Right ventricle myocardium superior (tissue), 1 donor: ENCODE measurements at regions of chr2 and their contacts with region 1.

Region 1: DNA sequence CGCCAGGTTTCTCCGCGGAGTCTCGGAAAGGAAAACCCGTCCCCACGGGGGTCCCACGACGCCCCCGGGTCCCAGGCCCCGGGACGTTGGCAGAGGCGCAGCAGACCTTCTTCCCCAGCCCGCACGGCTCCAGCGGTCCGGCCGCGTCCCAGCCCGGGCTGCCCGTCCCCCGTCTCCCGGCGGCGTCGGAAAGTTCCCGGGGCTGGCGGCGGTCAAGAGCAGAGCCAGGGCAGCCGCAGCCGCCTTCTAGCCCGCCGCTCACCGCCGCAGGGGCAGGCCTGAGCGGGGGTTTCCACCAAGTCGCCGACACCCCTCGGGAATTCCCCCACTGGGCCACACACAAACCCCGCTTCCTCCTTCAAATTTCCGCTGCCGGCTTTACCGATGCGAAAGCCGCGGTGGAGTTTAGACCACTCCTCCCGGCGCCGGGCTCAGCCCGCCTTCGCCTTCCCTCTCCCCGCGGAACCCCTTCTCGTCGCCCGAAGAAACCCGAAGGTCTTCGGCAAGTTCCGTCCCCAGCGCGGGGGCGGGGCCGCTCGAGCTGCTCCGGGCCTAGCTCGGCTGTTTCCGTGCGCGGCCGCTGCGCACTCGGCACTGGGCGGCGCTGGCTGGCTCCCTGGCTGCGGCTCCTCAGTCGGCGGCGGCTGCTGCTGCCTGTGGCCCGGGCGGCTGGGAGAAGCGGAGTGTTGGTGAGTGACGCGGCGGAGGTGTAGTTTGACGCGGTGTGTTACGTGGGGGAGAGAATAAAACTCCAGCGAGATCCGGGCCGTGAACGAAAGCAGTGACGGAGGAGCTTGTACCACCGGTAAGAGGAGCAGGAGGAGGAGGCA is at the start of gene CREB1:
- DNase-seq: peak; percentile 99
- ATAC-seq: peak; percentile 96
- total RNA-seq, gene CREB1: 47.9 TPM

Region 2: DNA sequence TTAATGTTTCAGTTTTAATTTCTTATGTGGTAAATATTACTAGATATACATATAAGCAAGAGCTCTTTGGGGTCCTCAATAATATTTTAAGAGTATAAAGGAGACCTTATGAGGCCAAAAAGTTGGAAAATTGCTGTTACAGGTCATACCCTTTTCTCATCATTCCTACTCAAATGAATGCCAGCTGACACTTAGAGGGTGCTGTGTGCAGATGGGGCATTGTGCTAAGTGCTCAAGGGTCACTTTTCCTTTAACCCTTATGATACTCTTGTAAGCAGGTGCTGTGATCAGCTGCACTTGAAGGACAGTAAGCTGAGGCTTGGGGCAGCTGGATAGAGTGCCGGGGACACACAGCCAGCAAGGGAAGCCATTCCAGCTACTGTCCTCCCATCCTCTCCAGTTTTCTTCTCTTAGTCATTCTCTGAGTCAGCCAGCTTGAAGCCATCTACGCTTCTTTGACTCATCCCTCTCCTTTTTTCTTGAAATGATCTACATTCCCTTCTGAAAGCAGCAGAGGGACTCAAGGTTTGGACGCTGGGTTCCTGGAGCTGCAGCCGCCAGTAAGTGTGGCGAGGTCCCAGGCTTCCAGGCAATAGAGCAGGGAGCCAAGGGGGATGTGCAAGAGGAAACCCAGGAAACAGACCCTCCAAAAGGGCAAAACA is 41.8 kb before region 1 on chr2:
- intact Hi-C with region 1: loop called (anchors 10 kb)
- DNase-seq: no peak
- ATAC-seq: no peak

Region 3: DNA sequence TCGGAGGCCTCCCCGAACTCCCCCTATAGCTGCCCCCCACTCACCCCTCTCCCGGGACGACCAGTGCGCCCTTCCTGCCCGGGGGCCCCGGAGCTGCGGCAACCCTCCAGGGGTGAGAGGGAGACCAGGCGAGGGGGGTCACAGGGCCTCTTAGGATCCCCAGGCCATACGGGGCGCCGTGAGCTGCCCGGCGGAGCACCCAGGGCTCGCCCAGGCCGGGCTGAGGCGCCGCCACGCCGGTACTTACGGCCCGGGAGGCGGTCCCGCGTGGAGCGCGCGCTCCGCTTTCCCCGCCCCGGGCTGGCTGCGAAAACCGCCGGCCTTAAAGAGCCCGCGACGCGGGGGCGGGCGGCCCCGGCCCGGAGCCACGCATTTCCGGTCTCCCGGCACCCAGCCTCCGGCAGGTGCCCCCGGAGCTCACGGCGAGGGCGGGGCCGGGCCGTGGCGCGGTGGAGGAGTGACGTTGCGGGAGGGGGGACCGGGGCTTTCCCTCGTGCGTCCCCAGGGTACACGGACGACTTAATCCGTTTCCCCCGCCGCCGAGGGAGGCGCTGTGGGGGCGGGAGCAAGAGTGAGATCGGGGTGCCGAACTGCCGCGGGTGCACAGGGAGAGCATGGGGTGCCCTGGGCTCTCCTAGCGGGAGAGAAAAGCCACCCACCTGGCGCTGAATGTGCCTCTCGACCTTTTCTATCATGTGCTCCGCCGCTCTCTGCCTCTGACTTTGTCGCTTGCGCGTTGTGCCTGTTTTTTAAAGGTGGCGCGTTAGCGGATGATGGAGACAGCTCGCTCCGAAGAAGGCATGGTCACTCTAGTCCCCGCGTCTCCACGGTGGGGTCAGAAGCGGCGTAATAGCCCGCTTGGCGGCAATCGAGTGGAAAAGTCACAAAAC is 95.7 kb after region 1 on chr2 and contains the start of gene METTL21A:
- intact Hi-C with region 1: loop called (anchors 5 kb)
- DNase-seq: peak; percentile 94
- ATAC-seq: peak; percentile 94
- total RNA-seq, gene METTL21A: 14.8 TPM